Esophagus muscularis mucosa (tissue), 4 donors: ENCODE measurements at regions of chr5 and their contacts with region 1.

Region 1: GRCh38 chr5:87412630-87413342 is at the start of gene CCNH:
- DNase-seq: peak; percentile 99
- H3K4me3 ChIP-seq: peak within 1 kb of the TSS; percentile 86 to 90 (median 88)
- H3K27ac ChIP-seq: peak within 1 kb of the TSS; percentile 97 to 100 (median 98)
- H3K4me1 ChIP-seq: peaks cover 19 to 26% (median 24%) of the 10 kb centered on the region in 4 donors
- H3K27me3 ChIP-seq: no peaks in the 10 kb centered on the region
- CTCF ChIP-seq: peak in 1 of 3 experiments; percentile 16
- EP300 ChIP-seq: peak; percentile 99
- POLR2A ChIP-seq: peak; percentile 93
- total RNA-seq, gene CCNH: 33.0 to 98.0 (median 67.6) TPM

Region 2: GRCh38 chr5:87267574-87268125 is 145.1 kb before region 1 on chr5 and contains the start of gene RASA1:
- intact Hi-C with region 1: loop called (anchors 5 kb)
- DNase-seq: peak; percentile 97
- H3K4me3 ChIP-seq: peak within 1 kb of the TSS; percentile 85 to 98 (median 92)
- H3K27ac ChIP-seq: peak within 1 kb of the TSS; percentile 83 to 94 (median 92)
- H3K4me1 ChIP-seq: peaks cover 11 to 41% (median 32%) of the 10 kb centered on the region in 4 donors
- H3K27me3 ChIP-seq: no peaks in the 10 kb centered on the region
- CTCF ChIP-seq: no peak
- EP300 ChIP-seq: no peak
- POLR2A ChIP-seq: peak; percentile 32
- total RNA-seq, gene RASA1: 23.4 to 27.3 (median 23.6) TPM

Region 3: GRCh38 chr5:87390888-87391199 is 21.9 kb before region 1 on chr5:
- intact Hi-C with region 1: loop called (anchors 1 kb)
- DNase-seq: no peak
- H3K4me3 ChIP-seq: no peak overlapping the region
- H3K27ac ChIP-seq: peak overlapping the region in 3 of 4 donors; percentile 8 to 11 (median 8)
- H3K4me1 ChIP-seq: peaks cover 22 to 41% (median 36%) of the 10 kb centered on the region in 4 donors
- H3K27me3 ChIP-seq: no peaks in the 10 kb centered on the region
- CTCF ChIP-seq: no peak
- EP300 ChIP-seq: no peak
- POLR2A ChIP-seq: no peak

Region 4: GRCh38 chr5:87541033-87541432 is 128.2 kb after region 1 on chr5:
- intact Hi-C with region 1: no loop called
- DNase-seq: no peak
- H3K4me3 ChIP-seq: no peak overlapping the region
- H3K27ac ChIP-seq: no peak overlapping the region
- H3K4me1 ChIP-seq: peaks cover 0 to 8% (median 4%) of the 10 kb centered on the region in 4 donors
- H3K27me3 ChIP-seq: no peaks in the 10 kb centered on the region
- CTCF ChIP-seq: no peak
- EP300 ChIP-seq: no peak
- POLR2A ChIP-seq: no peak